B cell (primary cell): ENCODE measurements at regions of chr16 and their contacts with region 1.

Region 1: GRCh38 chr16:3094289-3095027 is 4.6 kb downstream of the ZSCAN10 start:
- DNase-seq: peak; percentile 68
- ATAC-seq: no peak
- H3K4me3 ChIP-seq: no peak overlapping the region
- H3K4me3 Mint-ChIP-seq: no peak overlapping the region
- H3K27ac ChIP-seq: no peak overlapping the region
- H3K27ac Mint-ChIP-seq: peak overlapping the region; percentile 34
- H3K4me1 ChIP-seq: peaks cover 9 to 12% of the 10 kb centered on the region in 2 donors
- H3K4me1 Mint-ChIP-seq: peaks cover 20% of the 10 kb centered on the region
- H3K27me3 ChIP-seq: peaks cover 0 to 3% (median 0%) of the 10 kb centered on the region in 4 experiments
- H3K27me3 Mint-ChIP-seq: no peaks in the 10 kb centered on the region
- CTCF ChIP-seq: peak; percentile 62

Region 2: GRCh38 chr16:2656985-2657384 is 437.5 kb before region 1 on chr16:
- CTCF ChIA-PET with region 1: no interaction called
- POLR2A ChIA-PET with region 1: no interaction called
- intact Hi-C with region 1: no loop called
- DNase-seq: no peak
- ATAC-seq: no peak
- H3K4me3 ChIP-seq: no peak overlapping the region
- H3K4me3 Mint-ChIP-seq: no peak overlapping the region
- H3K27ac ChIP-seq: no peak overlapping the region
- H3K27ac Mint-ChIP-seq: no peak overlapping the region
- H3K4me1 ChIP-seq: no peaks in the 10 kb centered on the region
- H3K4me1 Mint-ChIP-seq: peaks cover 9% of the 10 kb centered on the region
- H3K27me3 ChIP-seq: peaks cover 0 to 8% (median 0%) of the 10 kb centered on the region in 4 experiments
- H3K27me3 Mint-ChIP-seq: no peaks in the 10 kb centered on the region
- CTCF ChIP-seq: no peak

Region 3: DNA sequence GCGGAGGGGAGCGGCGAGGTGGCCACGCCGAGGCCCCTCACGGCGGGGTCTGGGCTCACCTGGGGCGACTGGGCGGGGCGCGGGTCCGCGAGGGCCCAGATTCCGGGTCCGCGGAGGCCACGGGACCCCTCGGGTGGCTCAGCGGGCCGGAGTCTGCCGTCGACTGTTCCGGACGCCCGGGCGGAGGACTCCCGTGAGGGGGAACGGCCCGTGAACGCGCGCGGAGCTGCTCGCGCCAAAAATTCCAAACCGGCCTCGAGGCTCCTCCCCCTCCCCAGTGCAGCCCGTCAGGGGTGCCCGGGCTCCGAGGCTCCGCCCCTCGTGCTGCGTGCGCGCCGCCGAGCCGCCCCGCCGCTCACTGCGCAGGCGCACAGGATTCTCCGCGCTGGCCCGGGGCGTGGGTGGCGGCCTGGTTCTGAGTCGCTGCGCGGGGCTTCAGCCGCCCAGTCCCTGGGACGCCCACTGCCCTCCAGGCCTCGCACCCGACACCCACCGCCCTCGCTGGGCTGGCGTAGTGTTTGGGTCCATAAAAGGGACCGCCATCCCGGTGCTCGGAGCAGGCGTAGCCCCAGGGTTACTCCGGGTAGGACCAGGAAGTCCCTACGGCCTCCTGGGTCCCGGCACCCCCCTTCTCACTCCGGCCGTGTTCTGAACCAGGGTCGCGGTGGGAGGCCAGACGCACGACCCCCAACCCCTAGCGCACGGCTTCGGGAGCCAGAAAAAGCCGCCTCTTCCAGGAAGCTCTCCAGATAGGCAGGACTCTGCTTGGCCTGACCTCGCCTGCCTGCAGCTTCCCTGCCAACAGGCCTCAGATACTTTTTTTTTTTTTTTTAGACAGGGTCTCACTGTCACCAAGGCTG is 114.0 kb before region 1 on chr16 and contains the start of gene PKMYT1:
- CTCF ChIA-PET with region 1: no interaction called
- POLR2A ChIA-PET with region 1: no interaction called
- intact Hi-C with region 1: no loop called
- DNase-seq: peak; percentile 96
- ATAC-seq: peak; percentile 93
- H3K4me3 ChIP-seq: peak within 1 kb of the TSS; percentile 57 to 96 (median 82)
- H3K4me3 Mint-ChIP-seq: peak within 1 kb of the TSS; percentile 81
- H3K27ac ChIP-seq: peak within 1 kb of the TSS; percentile 71 to 83
- H3K27ac Mint-ChIP-seq: peak within 1 kb of the TSS; percentile 84
- H3K4me1 ChIP-seq: peaks cover 18 to 39% of the 10 kb centered on the region in 2 donors
- H3K4me1 Mint-ChIP-seq: peaks cover 21% of the 10 kb centered on the region
- H3K27me3 ChIP-seq: peaks cover 0 to 8% (median 1%) of the 10 kb centered on the region in 4 experiments
- H3K27me3 Mint-ChIP-seq: no peaks in the 10 kb centered on the region
- CTCF ChIP-seq: no peak
- total RNA-seq, gene PKMYT1: 0.67 and 1.0 TPM in 2 replicates

Region 4: DNA sequence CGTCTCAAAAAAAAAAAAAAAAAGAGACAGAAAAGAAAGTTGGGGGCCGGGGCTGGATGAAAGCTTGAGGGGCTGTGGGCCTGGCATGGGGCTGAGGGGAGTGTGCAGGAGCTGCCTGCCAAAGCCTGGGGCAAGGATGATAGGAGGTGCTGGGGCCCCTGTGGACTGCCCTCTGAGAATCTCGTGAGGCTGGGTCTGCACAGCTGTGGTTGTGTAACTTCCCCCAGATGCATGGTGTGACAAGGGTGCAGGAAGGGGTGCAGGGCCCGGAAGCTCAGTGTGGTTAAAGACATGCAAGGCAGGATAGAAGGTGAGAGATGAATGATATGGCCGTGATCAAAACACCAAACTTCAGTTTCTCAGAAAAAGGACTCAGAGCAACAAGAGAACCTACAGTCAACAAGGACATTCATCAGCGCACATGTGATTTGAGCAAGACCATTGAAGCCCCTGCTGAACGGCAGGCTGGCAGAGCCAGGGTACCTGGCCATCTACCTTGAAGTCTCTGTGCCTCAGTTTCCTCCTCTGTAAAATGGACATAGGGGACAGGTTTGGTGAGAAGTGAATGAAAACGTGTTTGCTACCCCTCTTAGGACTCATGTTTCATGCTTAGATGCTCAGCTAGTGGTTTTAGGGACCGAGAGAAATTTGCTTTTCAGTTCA is 19.5 kb before region 1 on chr16:
- CTCF ChIA-PET with region 1: interaction called, 28 read pairs
- POLR2A ChIA-PET with region 1: interaction called, 6 read pairs
- intact Hi-C with region 1: loop called (anchors 2 kb)
- DNase-seq: peak; percentile 65
- ATAC-seq: peak; percentile 88
- H3K4me3 ChIP-seq: peak overlapping the region in 4 of 5 experiments; percentile 2 to 29 (median 12)
- H3K4me3 Mint-ChIP-seq: peak overlapping the region; percentile 77
- H3K27ac ChIP-seq: peak overlapping the region; percentile 32 to 74
- H3K27ac Mint-ChIP-seq: peak overlapping the region; percentile 89
- H3K4me1 ChIP-seq: peaks cover 39 to 41% of the 10 kb centered on the region in 2 donors
- H3K4me1 Mint-ChIP-seq: peaks cover 55% of the 10 kb centered on the region
- H3K27me3 ChIP-seq: no peaks in the 10 kb centered on the region
- H3K27me3 Mint-ChIP-seq: no peaks in the 10 kb centered on the region
- CTCF ChIP-seq: no peak

Region 5: DNA sequence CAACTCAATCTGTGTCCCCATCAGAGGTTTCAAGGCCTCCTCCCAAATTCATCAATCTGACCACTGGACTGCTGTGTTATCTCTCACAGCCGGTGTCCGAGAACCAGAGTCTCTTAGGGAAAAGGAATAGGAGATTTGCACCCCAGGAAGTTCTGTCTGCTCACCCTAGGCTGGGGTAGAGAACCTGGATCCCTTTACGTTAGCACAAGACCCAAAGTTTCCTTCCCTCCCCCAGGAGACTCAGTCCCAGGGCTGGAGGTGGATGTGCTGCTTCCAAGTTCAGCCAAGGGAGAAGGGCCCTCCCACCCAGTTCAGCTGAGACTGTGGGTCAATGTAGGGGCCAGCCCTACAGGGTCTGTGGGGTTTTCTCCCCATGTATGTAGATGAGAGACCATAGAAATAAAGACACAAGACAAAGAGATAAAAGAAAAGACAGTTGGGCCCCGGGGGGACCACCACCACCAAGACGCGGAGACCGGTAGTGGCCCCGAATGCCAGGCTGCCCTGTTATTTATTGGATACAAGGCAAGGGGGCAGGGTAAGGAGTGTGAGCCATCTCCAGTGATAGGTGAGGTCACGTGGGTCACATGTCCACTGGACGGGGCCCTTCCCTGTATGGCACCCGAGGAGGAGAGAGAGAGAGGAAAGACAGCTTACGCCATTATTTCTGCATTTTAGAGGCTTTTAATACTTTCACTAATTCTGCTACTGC is 70.8 kb after region 1 on chr16:
- CTCF ChIA-PET with region 1: interaction called, 9 read pairs
- POLR2A ChIA-PET with region 1: no interaction called
- intact Hi-C with region 1: loop called (anchors 1 kb)
- DNase-seq: no peak
- ATAC-seq: no peak
- H3K4me3 ChIP-seq: peak overlapping the region in 4 of 5 experiments; percentile 25 to 57 (median 44)
- H3K4me3 Mint-ChIP-seq: peak overlapping the region; percentile 63
- H3K27ac ChIP-seq: peak overlapping the region; percentile 38 to 68
- H3K27ac Mint-ChIP-seq: peak overlapping the region; percentile 65
- H3K4me1 ChIP-seq: peaks cover 8 to 9% of the 10 kb centered on the region in 2 donors
- H3K4me1 Mint-ChIP-seq: peaks cover 10% of the 10 kb centered on the region
- H3K27me3 ChIP-seq: peaks cover 0 to 28% (median 11%) of the 10 kb centered on the region in 4 experiments
- H3K27me3 Mint-ChIP-seq: peaks cover 12% of the 10 kb centered on the region
- CTCF ChIP-seq: no peak

Region 6: GRCh38 chr16:3317315-3317999 is 223.0 kb after region 1 on chr16:
- CTCF ChIA-PET with region 1: no interaction called
- POLR2A ChIA-PET with region 1: interaction called, 16 read pairs
- intact Hi-C with region 1: no loop called
- DNase-seq: peak; percentile 16
- ATAC-seq: no peak
- H3K4me3 ChIP-seq: peak overlapping the region in 1 of 5 experiments; percentile 3
- H3K4me3 Mint-ChIP-seq: no peak overlapping the region
- H3K27ac ChIP-seq: no peak overlapping the region
- H3K27ac Mint-ChIP-seq: no peak overlapping the region
- H3K4me1 ChIP-seq: no peaks in the 10 kb centered on the region
- H3K4me1 Mint-ChIP-seq: no peaks in the 10 kb centered on the region
- H3K27me3 ChIP-seq: no peaks in the 10 kb centered on the region
- H3K27me3 Mint-ChIP-seq: no peaks in the 10 kb centered on the region
- CTCF ChIP-seq: no peak